IMR-90 (cell line): ENCODE measurements at regions of chr20 and their contacts with region 1.

Region 1: DNA sequence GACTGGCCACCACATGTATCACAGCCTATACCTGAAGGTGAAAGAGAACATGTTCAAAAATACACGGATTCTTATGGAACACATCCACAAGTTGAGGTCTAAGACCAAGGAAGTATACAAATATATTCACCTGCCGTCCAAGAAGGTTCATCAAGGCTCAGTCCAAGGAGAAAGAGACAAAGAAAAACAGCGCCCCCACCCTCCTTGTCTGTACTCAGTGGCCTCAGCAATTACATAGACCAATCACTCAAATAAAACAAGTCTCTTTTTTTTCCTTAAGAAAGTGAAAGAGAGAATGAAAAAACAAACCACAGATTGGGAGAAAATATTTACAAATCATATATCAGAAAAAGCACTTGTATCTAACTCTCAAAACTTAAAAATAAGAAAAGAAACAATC is 19.5 kb downstream of the CPXM1 start:
- DNase-seq: no peak
- ATAC-seq: no peak
- H3K4me3 ChIP-seq: no peak overlapping the region
- H3K27ac ChIP-seq: no peak overlapping the region
- H3K4me1 ChIP-seq: no peaks in the 10 kb centered on the region
- H3K27me3 ChIP-seq: peaks cover 11% of the 10 kb centered on the region
- CTCF ChIP-seq: no peak
- POLR2A ChIP-seq: no peak
- RAD21 ChIP-seq: no peak

Region 2: DNA sequence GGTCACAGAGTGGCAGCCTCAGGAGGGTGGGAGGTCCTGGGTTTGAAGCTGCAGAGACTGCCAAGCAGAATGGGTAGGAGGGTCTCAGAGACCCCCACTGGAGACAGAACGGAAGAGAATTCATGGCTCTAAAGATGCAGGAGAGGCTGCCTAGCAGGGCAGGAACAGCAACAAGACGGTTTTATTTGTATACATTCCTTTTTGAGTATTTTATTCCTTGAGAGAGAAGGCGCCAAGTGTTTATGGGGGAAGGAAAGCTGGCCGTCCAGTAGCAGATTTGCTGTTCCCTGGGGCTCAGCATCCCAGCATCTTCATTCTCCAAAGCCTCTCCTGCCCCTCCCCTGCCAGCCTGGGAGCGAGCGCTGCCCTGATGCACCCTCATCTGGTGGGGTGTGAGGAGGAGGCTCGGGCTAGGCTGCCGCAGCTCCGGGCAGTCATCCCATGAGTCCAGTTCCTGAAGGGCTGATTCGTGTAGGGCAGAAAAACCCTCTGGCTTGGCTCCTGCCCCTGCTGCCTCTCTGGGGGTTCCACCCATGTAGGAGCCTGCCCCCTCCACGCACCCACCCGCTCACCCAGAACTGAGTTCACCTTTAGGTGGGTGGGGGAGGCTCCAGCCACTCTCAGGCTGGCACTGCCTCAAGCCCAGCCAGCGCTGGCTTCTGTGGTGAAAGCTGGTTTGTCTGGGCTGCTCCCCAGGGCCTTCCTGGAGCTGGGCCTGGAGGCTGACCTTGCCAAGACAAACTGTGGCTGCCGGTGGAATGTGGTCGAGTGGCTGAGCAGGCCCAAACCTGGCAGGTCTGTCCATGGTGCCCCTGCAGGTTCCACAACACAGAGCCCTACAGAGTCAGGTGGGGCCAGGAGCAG is 12.9 kb before region 1 on chr20:
- CTCF ChIA-PET with region 1: interaction called, 3 read pairs
- POLR2A ChIA-PET with region 1: no interaction called
- dilution Hi-C with region 1: no loop called
- in situ Hi-C with region 1: no loop called
- intact Hi-C with region 1: loop called (anchors 2 kb)
- DNase-seq: peak; percentile 24
- ATAC-seq: peak; percentile 82
- H3K4me3 ChIP-seq: no peak overlapping the region
- H3K27ac ChIP-seq: no peak overlapping the region
- H3K4me1 ChIP-seq: peaks cover 3% of the 10 kb centered on the region; the same call in 1 of the 2 replicates
- H3K27me3 ChIP-seq: peaks cover 23% of the 10 kb centered on the region
- CTCF ChIP-seq: no peak
- POLR2A ChIP-seq: no peak
- RAD21 ChIP-seq: no peak